GM12878 (cell line): ENCODE measurements at regions of chr2 and their contacts with region 1.

Region 1: DNA sequence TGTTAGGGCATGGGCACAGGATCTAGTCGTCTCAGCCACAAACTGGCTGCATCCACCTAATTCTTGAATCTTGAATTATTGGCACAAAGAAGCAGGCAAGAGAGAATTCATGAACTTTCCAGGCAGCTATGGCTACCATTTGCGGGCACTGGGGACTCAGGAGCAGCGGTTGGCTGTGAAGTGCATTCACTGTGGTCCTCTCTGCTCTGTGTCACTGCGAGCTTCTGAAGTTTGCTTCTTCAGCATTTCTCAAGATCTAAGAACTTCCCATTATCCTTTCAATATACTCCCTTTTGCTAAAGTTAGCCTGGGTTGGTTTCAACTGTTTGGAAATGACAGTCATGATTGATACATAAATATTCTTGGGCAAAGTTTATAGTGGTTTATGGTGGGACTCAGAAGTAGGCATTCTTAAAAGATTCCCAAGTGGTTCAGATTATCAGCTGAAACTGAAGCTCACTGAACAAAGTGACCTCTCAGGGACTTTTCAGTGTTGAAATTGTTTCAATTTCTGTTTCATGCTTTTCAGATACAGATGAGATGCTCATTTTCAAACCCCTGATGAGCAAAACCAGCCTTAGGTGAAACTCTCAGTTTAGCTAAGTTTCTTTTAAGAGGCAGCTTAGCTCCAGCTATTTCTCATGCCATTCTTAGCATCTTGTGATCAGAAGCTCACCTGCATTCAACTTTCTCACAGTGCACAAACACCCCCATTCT is 1258.3 kb upstream of the GYPC start:
- DNase-seq: peak; percentile 88
- ATAC-seq: peak; percentile 94
- H3K4me3 ChIP-seq: peak overlapping the region; percentile 27; the same call in 1 of the 2 replicates
- H3K27ac ChIP-seq: peak overlapping the region; percentile 85
- H3K4me1 ChIP-seq: peaks cover 28% of the 10 kb centered on the region
- H3K27me3 ChIP-seq: no peaks in the 10 kb centered on the region
- CTCF ChIP-seq: no peak
- EP300 ChIP-seq: peak; percentile 56 to 73; a peak in 3 of 4 replicates
- POLR2A ChIP-seq: no peak
- RAD21 ChIP-seq: peak; percentile 13; the same call in 1 of the 2 replicates

Region 2: DNA sequence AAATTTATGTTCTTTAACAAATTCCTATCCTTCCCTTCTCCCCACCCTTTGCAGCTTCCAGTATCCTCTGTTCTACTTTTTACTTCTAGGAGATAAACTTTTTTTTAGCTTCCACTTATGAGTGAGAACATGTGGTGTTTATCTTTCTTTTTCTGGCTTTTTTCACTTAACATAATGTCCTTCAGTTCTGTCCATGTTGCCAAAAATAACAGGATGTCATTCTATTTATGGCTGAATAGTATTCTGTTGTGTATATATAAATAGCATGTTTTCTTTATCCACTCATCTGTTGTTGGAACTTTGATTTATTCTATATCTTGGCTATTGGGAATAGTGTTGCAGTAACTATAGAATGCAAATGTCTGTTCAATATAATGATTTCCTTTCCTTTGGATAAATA is 181.4 kb before region 1 on chr2:
- CTCF ChIA-PET with region 1: no interaction called
- POLR2A ChIA-PET with region 1: no interaction called
- RAD21 ChIA-PET with region 1: no interaction called
- SMC1A ChIA-PET with region 1: no interaction called
- in situ Hi-C with region 1: no loop called
- intact Hi-C with region 1: no loop called
- DNase-seq: no peak
- ATAC-seq: no peak
- H3K4me3 ChIP-seq: no peak overlapping the region
- H3K27ac ChIP-seq: no peak overlapping the region
- H3K4me1 ChIP-seq: no peaks in the 10 kb centered on the region
- H3K27me3 ChIP-seq: no peaks in the 10 kb centered on the region
- CTCF ChIP-seq: no peak
- EP300 ChIP-seq: no peak
- POLR2A ChIP-seq: no peak
- RAD21 ChIP-seq: no peak

Region 3: DNA sequence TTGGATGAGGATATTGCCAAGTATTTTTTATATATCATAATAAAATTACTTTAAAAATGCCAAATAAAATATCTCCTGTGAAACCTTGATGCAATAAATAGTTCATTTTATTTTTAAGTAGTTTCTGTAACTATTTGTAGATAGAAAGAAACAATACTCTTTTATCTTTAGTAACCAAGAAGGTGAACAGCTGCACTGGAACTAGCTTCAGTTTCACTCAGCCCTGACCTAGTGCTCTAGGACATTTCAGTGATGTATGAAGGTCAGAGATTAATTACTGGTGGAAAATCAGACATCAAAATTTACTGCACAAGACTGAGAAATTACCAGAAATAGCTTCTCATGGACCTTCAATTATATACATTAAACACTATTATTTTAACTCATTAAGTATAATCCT is 67.6 kb before region 1 on chr2:
- CTCF ChIA-PET with region 1: interaction called, 3 read pairs
- POLR2A ChIA-PET with region 1: no interaction called
- RAD21 ChIA-PET with region 1: interaction called, 4 read pairs
- SMC1A ChIA-PET with region 1: interaction called, 5 read pairs
- in situ Hi-C with region 1: no loop called
- intact Hi-C with region 1: loop called (anchors 5 kb)
- DNase-seq: peak; percentile 21
- ATAC-seq: peak; percentile 87
- H3K4me3 ChIP-seq: no peak overlapping the region
- H3K27ac ChIP-seq: peak overlapping the region; percentile 6; the same call in 1 of the 2 replicates
- H3K4me1 ChIP-seq: no peaks in the 10 kb centered on the region; the same call in 1 of the 2 replicates
- H3K27me3 ChIP-seq: no peaks in the 10 kb centered on the region
- CTCF ChIP-seq: no peak
- EP300 ChIP-seq: peak in 1 of 2 experiments; percentile 14; a peak in 1 of 4 replicates
- POLR2A ChIP-seq: no peak
- RAD21 ChIP-seq: no peak

Region 4: GRCh38 chr2:125364192-125364983 is 33.3 kb before region 1 on chr2:
- CTCF ChIA-PET with region 1: no interaction called
- POLR2A ChIA-PET with region 1: no interaction called
- RAD21 ChIA-PET with region 1: interaction called, 4 read pairs
- SMC1A ChIA-PET with region 1: interaction called, 12 read pairs
- in situ Hi-C with region 1: no loop called
- intact Hi-C with region 1: no loop called
- DNase-seq: no peak
- ATAC-seq: peak; percentile 43; the same call in 2 of the 3 replicates
- H3K4me3 ChIP-seq: no peak overlapping the region
- H3K27ac ChIP-seq: no peak overlapping the region
- H3K4me1 ChIP-seq: no peaks in the 10 kb centered on the region
- H3K27me3 ChIP-seq: no peaks in the 10 kb centered on the region
- CTCF ChIP-seq: 0 out of 6 replicates have a peak, but pooled peaks of 1 of the 3 experiments have one; percentile 22
- EP300 ChIP-seq: no peak
- POLR2A ChIP-seq: no peak
- RAD21 ChIP-seq: peak; percentile 9; the same call in 1 of the 2 replicates

Region 5: DNA sequence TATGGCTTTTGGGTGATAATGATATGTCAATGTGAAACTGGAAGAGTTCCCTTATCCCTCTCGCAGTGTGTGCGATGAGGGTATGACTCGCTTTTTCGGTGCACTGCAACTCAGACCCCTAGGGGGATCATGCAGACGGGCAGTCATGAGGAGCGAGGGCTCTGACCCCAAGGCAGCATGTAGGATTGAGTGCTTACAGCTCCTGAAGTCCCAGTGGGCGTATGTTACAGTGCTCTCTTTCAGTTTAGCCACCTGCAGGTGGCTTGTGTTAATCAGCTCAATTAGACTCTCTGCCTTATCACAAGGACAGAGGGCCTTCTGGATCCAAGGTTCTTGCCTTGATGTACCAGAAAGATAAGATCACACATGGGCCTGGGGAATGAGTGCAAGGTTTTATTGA is 11.6 kb before region 1 on chr2:
- CTCF ChIA-PET with region 1: interaction called, 6 read pairs
- POLR2A ChIA-PET with region 1: no interaction called
- RAD21 ChIA-PET with region 1: interaction called, 10 read pairs
- SMC1A ChIA-PET with region 1: interaction called, 11 read pairs
- in situ Hi-C with region 1: no loop called
- intact Hi-C with region 1: no loop called
- DNase-seq: no peak
- ATAC-seq: peak; percentile 31; the same call in 2 of the 3 replicates
- H3K4me3 ChIP-seq: no peak overlapping the region
- H3K27ac ChIP-seq: no peak overlapping the region
- H3K4me1 ChIP-seq: no peaks in the 10 kb centered on the region
- H3K27me3 ChIP-seq: no peaks in the 10 kb centered on the region
- CTCF ChIP-seq: no peak
- EP300 ChIP-seq: no peak
- POLR2A ChIP-seq: no peak
- RAD21 ChIP-seq: no peak

Region 6: GRCh38 chr2:125471963-125472362 is 74.3 kb after region 1 on chr2:
- CTCF ChIA-PET with region 1: no interaction called
- POLR2A ChIA-PET with region 1: no interaction called
- RAD21 ChIA-PET with region 1: interaction called, 12 read pairs
- SMC1A ChIA-PET with region 1: interaction called, 6 read pairs
- in situ Hi-C with region 1: no loop called
- intact Hi-C with region 1: no loop called
- DNase-seq: no peak
- ATAC-seq: peak; percentile 75
- H3K4me3 ChIP-seq: no peak overlapping the region
- H3K27ac ChIP-seq: no peak overlapping the region
- H3K4me1 ChIP-seq: no peaks in the 10 kb centered on the region
- H3K27me3 ChIP-seq: no peaks in the 10 kb centered on the region
- CTCF ChIP-seq: peak; percentile 49 to 64 (median 61); a peak in 5 of 6 replicates
- EP300 ChIP-seq: no peak
- POLR2A ChIP-seq: no peak
- RAD21 ChIP-seq: peak; percentile 78

Region 7: GRCh38 chr2:126995621-126996377 is 1598.1 kb after region 1 on chr2:
- CTCF ChIA-PET with region 1: no interaction called
- POLR2A ChIA-PET with region 1: no interaction called
- RAD21 ChIA-PET with region 1: no interaction called
- SMC1A ChIA-PET with region 1: no interaction called
- in situ Hi-C with region 1: no loop called
- intact Hi-C with region 1: loop called (anchors 10 kb)
- DNase-seq: no peak
- ATAC-seq: peak; percentile 71
- H3K4me3 ChIP-seq: no peak overlapping the region
- H3K27ac ChIP-seq: no peak overlapping the region
- H3K4me1 ChIP-seq: no peaks in the 10 kb centered on the region
- H3K27me3 ChIP-seq: no peaks in the 10 kb centered on the region
- CTCF ChIP-seq: no peak
- EP300 ChIP-seq: no peak
- POLR2A ChIP-seq: no peak
- RAD21 ChIP-seq: no peak